Activated naive CD4-positive, alpha-beta T cell treated with anti-CD3 and anti-CD28 coated beads for 36 hours (primary cell): ENCODE measurements at regions of chr15 and their contacts with region 1.

Region 1: DNA sequence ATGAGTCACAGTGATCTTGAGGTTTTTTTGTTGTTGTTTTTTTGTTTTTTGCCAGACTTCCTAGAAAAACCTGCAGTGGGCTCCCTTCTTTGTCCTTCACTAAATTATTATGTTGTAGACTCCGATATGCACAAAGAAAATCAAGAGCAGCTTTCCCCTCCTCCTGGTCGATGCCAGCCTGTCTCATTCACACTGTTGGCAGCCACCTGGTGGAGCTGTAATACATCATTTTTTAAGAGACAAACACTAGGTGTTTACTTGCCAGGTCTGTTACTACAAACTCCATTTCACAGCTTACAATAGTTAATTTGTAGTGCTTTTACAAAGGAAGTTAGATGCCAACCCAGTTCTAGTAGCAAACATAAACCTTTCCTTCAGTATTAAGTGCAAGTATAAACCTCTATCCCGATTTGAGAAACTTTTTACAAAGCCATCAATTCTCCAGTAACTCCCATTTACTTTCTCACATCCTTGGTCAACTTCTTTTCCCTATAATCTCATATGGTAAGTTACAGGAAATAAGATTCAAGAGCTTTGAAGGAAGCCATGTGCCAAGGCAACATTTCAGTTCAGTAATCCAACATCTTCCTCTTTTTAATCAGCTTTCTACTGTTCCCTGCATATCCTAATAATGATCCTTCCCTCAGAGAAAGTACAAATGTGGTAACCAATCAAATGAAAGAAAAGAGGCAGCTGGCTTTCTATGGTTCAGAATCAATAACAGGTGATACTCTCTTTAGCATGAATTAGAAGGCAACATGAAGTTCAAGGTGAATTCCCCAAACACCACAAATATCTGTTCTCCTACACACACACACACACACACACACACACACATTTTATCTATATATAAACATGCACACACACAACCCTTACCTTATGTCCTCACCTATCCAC is 14.0 kb downstream of the AAGAB start:
- DNase-seq: peak; percentile 48
- H3K4me3 Mint-ChIP-seq: peak overlapping the region; percentile 5
- H3K27ac Mint-ChIP-seq: peak overlapping the region; percentile 87
- H3K4me1 Mint-ChIP-seq: peaks cover 45% of the 10 kb centered on the region
- H3K27me3 Mint-ChIP-seq: no peaks in the 10 kb centered on the region

Region 2: DNA sequence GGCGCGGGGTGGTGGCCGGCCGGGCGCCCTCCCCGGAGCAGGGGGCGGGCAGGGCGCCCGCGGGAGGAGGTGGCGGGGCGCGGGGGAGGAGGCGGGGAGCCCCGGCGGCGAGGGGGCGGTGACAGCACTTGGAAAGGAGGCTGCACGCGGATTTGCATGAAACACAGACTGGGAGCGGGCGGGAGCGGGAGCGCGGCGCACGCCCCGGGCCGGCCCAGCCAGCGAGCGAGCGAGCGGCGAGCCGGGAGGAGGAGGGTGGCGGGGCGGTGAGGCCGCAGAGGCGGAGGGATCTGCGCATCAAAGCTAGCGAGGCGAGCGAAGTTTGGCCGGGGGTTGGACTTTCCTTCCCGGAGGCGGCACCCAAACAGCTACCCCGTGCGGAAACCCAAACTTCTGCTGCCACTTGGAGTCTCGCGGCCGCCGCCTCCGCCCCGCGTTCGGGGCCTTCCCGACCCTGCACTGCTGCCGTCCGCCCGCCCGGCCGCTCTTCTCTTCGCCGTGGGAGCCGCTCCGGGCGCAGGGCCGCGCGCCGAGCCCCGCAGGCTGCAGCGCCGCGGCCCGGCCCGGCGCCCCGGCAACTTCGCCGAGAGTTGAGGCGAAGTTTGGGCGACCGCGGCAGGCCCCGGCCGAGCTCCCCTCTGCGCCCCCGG is 174.9 kb before region 1 on chr15 and contains the start of gene SMAD3:
- CTCF ChIA-PET with region 1: no interaction called
- intact Hi-C with region 1: loop called (anchors 2 kb)
- DNase-seq: peak; percentile 80
- H3K4me3 Mint-ChIP-seq: peak within 1 kb of the TSS; percentile 95
- H3K27ac Mint-ChIP-seq: peak within 1 kb of the TSS; percentile 89
- H3K4me1 Mint-ChIP-seq: peaks cover 50% of the 10 kb centered on the region
- H3K27me3 Mint-ChIP-seq: peaks cover 17% of the 10 kb centered on the region
- total RNA-seq, gene SMAD3: 35.1 to 39.2 TPM

Region 3: GRCh38 chr15:67101911-67102598 is 138.4 kb before region 1 on chr15:
- CTCF ChIA-PET with region 1: no interaction called
- intact Hi-C with region 1: loop called (anchors 1 kb)
- DNase-seq: peak; percentile 80
- H3K4me3 Mint-ChIP-seq: no peak overlapping the region
- H3K27ac Mint-ChIP-seq: no peak overlapping the region
- H3K4me1 Mint-ChIP-seq: peaks cover 31% of the 10 kb centered on the region
- H3K27me3 Mint-ChIP-seq: no peaks in the 10 kb centered on the region

Region 4: GRCh38 chr15:67175643-67176071 is 64.8 kb before region 1 on chr15:
- CTCF ChIA-PET with region 1: interaction called, 7 read pairs
- intact Hi-C with region 1: loop called (anchors 1 kb)
- DNase-seq: peak; percentile 89
- H3K4me3 Mint-ChIP-seq: peak overlapping the region; percentile 9
- H3K27ac Mint-ChIP-seq: peak overlapping the region; percentile 91
- H3K4me1 Mint-ChIP-seq: peaks cover 56% of the 10 kb centered on the region
- H3K27me3 Mint-ChIP-seq: no peaks in the 10 kb centered on the region

Region 5: DNA sequence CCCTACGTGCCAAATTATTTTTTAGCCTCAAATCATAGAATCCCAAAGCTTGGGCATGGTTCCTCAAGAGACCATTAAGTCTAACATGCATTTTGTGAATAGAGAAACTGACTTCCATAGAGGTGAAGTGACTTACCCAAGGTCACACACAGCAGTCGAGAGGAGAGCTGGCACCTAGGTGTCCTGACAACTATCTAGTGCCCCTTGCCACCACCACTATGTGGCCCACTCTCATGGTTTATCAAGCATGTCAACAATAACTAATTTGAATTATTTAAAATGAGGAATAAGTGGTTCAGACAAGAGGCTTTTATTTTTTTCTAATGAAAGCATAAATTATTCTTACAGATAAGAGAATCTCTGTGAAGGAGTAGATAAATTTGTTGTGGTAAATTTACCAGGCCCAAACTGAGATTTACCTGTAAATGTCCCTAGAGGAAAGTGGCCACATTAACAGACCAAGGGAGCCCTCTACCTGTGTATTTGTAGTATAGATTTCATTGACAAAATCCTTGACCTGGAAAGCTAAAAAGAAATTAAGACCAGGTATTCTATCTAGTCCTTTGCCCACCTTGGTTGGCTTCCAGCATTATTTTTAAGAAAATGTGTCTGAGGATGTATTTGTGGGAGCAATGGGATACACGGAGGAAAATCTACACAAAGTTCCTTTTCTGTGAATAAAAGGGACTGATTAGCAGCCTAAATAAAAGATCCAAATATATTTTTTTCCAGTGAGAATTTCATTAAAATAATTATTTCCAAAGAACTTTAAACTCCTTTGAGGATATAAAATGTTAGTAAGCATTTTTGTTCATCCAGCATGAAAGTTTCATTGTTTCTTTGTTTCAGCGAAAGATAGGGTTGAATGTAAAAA is 63.2 kb after region 1 on chr15:
- CTCF ChIA-PET with region 1: interaction called, 4 read pairs
- intact Hi-C with region 1: loop called (anchors 1 kb)
- DNase-seq: peak; percentile 41
- H3K4me3 Mint-ChIP-seq: no peak overlapping the region
- H3K27ac Mint-ChIP-seq: no peak overlapping the region
- H3K4me1 Mint-ChIP-seq: peaks cover 15% of the 10 kb centered on the region
- H3K27me3 Mint-ChIP-seq: no peaks in the 10 kb centered on the region

Region 6: GRCh38 chr15:67521029-67521811 is 280.7 kb after region 1 on chr15 and contains the start of gene C15orf61:
- CTCF ChIA-PET with region 1: no interaction called
- intact Hi-C with region 1: loop called (anchors 5 kb)
- DNase-seq: peak; percentile 89
- H3K4me3 Mint-ChIP-seq: peak within 1 kb of the TSS; percentile 92
- H3K27ac Mint-ChIP-seq: peak within 1 kb of the TSS; percentile 95
- H3K4me1 Mint-ChIP-seq: peaks cover 23% of the 10 kb centered on the region
- H3K27me3 Mint-ChIP-seq: no peaks in the 10 kb centered on the region
- total RNA-seq, gene C15orf61: 6.2 to 7.2 TPM

Region 7: DNA sequence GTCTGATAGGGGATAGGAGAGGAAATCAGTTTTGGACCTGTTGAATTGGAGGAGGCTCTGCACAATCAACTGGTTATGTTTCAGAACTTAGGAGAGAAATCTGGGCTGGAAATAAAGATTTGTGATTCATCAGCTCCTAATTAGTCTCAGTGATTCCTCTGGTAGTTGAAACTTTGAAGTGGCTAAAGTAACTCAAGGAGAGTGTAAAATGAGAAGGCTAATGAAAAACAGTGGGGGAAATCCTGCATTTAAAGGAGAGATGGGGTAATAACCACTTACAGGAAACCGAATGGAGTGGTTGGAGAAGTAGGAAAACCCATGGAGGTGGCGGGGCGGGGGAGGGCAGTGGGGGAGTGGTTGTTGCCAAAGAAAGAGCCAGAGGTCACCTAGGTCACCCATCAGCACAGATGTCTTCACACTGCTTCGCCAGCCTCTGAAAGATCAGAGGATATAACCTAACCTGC is 334.6 kb after region 1 on chr15:
- CTCF ChIA-PET with region 1: no interaction called
- intact Hi-C with region 1: no loop called
- DNase-seq: no peak
- H3K4me3 Mint-ChIP-seq: no peak overlapping the region
- H3K27ac Mint-ChIP-seq: no peak overlapping the region
- H3K4me1 Mint-ChIP-seq: peaks cover 4% of the 10 kb centered on the region
- H3K27me3 Mint-ChIP-seq: no peaks in the 10 kb centered on the region

Region 8: GRCh38 chr15:67762610-67763368 is 522.3 kb after region 1 on chr15:
- CTCF ChIA-PET with region 1: no interaction called
- intact Hi-C with region 1: loop called (anchors 1 kb)
- DNase-seq: peak; percentile 83
- H3K4me3 Mint-ChIP-seq: no peak overlapping the region
- H3K27ac Mint-ChIP-seq: peak overlapping the region; percentile 28
- H3K4me1 Mint-ChIP-seq: peaks cover 61% of the 10 kb centered on the region
- H3K27me3 Mint-ChIP-seq: no peaks in the 10 kb centered on the region